ENCODE measurements at regions of chr6 and their contacts with region 1.

Region 1: DNA sequence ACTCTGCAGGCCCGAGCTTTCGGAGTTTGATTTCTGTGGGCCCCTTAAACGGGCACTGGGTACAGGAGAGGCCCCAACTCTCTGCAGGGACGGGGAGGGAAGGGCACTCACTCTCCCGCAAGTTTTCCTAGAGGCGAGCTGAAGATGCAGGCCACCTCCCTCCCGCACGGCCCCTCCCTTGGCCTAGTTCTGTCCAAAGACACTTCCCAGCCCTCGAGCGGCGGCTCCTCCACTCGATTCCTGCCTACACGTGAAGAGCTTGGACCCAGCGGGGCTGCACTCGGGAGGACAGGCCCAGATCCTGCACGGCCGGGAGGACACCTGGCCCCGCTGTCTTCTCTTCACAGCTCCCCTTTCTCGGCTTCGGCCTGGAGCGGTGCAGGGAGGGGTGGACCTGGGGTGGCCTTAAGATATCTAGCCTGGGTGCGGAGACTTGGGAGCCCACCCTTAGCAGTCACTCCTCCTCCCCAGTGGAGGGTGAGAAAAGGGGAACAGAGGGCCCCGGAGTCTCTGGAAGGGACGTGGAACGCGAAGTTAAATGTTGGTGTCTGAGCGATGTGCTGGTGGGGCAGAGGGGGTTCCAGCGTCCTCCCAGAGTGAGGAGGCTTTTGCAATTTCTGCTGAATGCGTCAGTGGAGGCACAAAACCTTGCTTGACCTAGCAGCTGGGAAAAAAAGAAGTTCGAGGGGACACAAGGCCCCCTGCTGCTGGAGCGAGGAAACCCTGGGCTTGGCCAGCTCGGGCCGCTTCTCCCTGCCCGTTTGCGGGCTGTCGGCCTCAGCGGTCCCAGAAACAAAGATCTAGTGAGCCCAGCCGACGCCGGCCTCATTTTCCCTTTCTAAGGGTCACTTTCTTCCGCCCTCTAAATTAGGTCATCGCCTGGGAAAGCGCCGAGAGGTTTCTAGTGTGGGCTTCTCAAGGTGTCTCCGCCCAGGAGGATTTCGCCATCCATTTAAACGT is 4.9 kb downstream of the OLIG3 start:
- DNase-seq: no peak
- H3K4me3 Mint-ChIP-seq: no peak overlapping the region
- H3K27ac Mint-ChIP-seq: no peak overlapping the region
- H3K4me1 Mint-ChIP-seq: peaks cover 23% of the 10 kb centered on the region
- H3K27me3 Mint-ChIP-seq: peaks cover 87% of the 10 kb centered on the region

Region 2: DNA sequence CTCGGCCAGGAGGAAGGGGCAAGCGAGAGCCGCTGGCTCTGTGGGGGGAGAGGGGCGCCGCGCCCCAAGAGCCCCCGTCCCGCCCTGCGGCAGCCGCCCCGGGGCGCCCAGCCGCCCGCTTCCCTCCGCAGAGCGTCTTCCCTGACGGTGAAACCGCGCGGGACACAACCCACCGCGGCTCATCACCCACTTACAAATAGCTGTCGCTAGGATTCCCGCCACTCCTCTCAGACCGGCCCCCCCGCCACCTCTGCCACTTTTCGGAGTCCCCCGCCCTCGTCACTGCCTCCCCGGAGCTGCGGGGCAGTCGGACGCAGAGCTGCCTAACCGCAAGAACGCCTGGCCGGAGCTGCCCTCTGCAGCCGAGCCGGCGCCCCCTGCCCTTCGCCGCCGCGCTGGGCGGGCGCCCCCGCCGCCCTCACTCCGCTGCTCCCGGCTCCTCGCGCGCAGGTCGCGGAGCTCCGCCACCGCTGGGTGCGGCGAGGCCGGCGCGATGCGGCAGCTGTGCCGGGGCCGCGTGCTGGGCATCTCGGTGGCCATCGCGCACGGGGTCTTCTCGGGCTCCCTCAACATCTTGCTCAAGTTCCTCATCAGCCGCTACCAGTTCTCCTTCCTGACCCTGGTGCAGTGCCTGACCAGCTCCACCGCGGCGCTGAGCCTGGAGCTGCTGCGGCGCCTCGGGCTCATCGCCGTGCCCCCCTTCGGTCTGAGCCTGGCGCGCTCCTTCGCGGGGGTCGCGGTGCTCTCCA is 567.2 kb before region 1 on chr6 and contains the start of gene SLC35D3:
- intact Hi-C with region 1: loop called (anchors 5 kb)
- DNase-seq: peak; percentile 10
- H3K4me3 Mint-ChIP-seq: peak within 1 kb of the TSS; percentile 74
- H3K27ac Mint-ChIP-seq: no peak within 1 kb of the TSS
- H3K4me1 Mint-ChIP-seq: peaks cover 14% of the 10 kb centered on the region
- H3K27me3 Mint-ChIP-seq: peaks cover 57% of the 10 kb centered on the region
- total RNA-seq, gene SLC35D3: not detected in 2 replicates